ENCODE measurements at regions of chr15 and their contacts with region 1.

Region 1: GRCh38 chr15:64216730-64217428 is 54.1 kb upstream of the PPIB start:
- DNase-seq: peak; percentile 97
- ATAC-seq: peak; percentile 100
- H3K4me3 ChIP-seq: no peak overlapping the region
- H3K27ac ChIP-seq: peak overlapping the region; percentile 56
- H3K4me1 ChIP-seq: peaks cover 49% of the 10 kb centered on the region
- H3K27me3 ChIP-seq: no peaks in the 10 kb centered on the region
- CTCF ChIP-seq: peak; percentile 72
- EP300 ChIP-seq: peak in 1 of 2 experiments; percentile 76; a peak in 2 of 4 replicates
- POLR2A ChIP-seq: no peak
- RAD21 ChIP-seq: 0 out of 2 replicates have a peak, but pooled peaks have one; percentile 37

Region 2: GRCh38 chr15:63860155-63860554 is 356.7 kb before region 1 on chr15:
- CTCF ChIA-PET with region 1: no interaction called
- POLR2A ChIA-PET with region 1: no interaction called
- in situ Hi-C with region 1: no loop called
- intact Hi-C with region 1: no loop called
- DNase-seq: no peak
- ATAC-seq: no peak
- H3K4me3 ChIP-seq: no peak overlapping the region
- H3K27ac ChIP-seq: no peak overlapping the region
- H3K4me1 ChIP-seq: peaks cover 39% of the 10 kb centered on the region
- H3K27me3 ChIP-seq: no peaks in the 10 kb centered on the region
- CTCF ChIP-seq: no peak
- EP300 ChIP-seq: no peak
- POLR2A ChIP-seq: no peak
- RAD21 ChIP-seq: no peak

Region 3: DNA sequence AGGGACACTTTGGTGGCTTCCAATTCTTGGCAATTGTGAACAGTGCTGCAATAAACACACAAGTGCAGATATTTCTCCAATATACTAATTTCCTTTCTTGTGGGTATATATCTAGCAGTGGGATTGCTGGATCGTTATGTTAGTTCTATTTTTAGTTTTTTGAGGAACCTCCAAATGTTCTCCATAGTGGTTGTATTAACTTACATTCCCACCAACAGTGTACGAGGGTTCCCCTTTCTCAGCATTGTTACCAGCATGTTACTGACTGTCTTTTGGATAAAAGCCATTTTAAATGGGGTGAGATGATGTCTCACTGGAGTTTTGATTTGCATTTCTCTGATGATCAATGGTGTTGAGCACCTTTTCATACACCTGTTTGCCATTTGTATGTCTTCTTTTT is 263.4 kb before region 1 on chr15:
- CTCF ChIA-PET with region 1: no interaction called
- POLR2A ChIA-PET with region 1: no interaction called
- in situ Hi-C with region 1: no loop called
- intact Hi-C with region 1: no loop called
- DNase-seq: no peak
- ATAC-seq: no peak
- H3K4me3 ChIP-seq: no peak overlapping the region
- H3K27ac ChIP-seq: no peak overlapping the region
- H3K4me1 ChIP-seq: no peaks in the 10 kb centered on the region
- H3K27me3 ChIP-seq: no peaks in the 10 kb centered on the region
- CTCF ChIP-seq: no peak
- EP300 ChIP-seq: no peak
- POLR2A ChIP-seq: no peak
- RAD21 ChIP-seq: no peak

Region 4: GRCh38 chr15:64162870-64163658 is 53.8 kb before region 1 on chr15 and contains the start of gene PPIB:
- CTCF ChIA-PET with region 1: no interaction called
- POLR2A ChIA-PET with region 1: interaction called, 11 read pairs
- in situ Hi-C with region 1: no loop called
- intact Hi-C with region 1: no loop called
- DNase-seq: peak; percentile 93
- ATAC-seq: peak; percentile 96
- H3K4me3 ChIP-seq: peak within 1 kb of the TSS; percentile 95 to 98 (median 97)
- H3K27ac ChIP-seq: peak within 1 kb of the TSS; percentile 90
- H3K4me1 ChIP-seq: peaks cover 53% of the 10 kb centered on the region
- H3K27me3 ChIP-seq: no peaks in the 10 kb centered on the region; a peak in 1 of 5 replicates
- CTCF ChIP-seq: peak; percentile 89
- EP300 ChIP-seq: 0 out of 4 replicates have a peak, but pooled peaks of 1 of the 2 experiments have one; percentile 19
- POLR2A ChIP-seq: peak; percentile 88
- RAD21 ChIP-seq: peak; percentile 66
- total RNA-seq, gene PPIB: 476 and 882 TPM in 2 replicates

Region 5: GRCh38 chr15:64247906-64248541 is 31.1 kb after region 1 on chr15:
- CTCF ChIA-PET with region 1: no interaction called
- POLR2A ChIA-PET with region 1: interaction called, 4 read pairs
- in situ Hi-C with region 1: no loop called
- intact Hi-C with region 1: loop called (anchors 1 kb)
- DNase-seq: peak; percentile 93
- ATAC-seq: peak; percentile 95
- H3K4me3 ChIP-seq: peak overlapping the region in 1 of 3 experiments; percentile 13; a peak in 1 of 6 replicates
- H3K27ac ChIP-seq: peak overlapping the region; percentile 84
- H3K4me1 ChIP-seq: peaks cover 52% of the 10 kb centered on the region
- H3K27me3 ChIP-seq: no peaks in the 10 kb centered on the region
- CTCF ChIP-seq: no peak
- EP300 ChIP-seq: peak; percentile 66 to 75; a peak in 2 of 4 replicates
- POLR2A ChIP-seq: no peak
- RAD21 ChIP-seq: no peak

Region 6: GRCh38 chr15:64355944-64356709 is 139.2 kb after region 1 on chr15 and contains the start of gene CSNK1G1:
- CTCF ChIA-PET with region 1: no interaction called
- POLR2A ChIA-PET with region 1: interaction called, 3 read pairs
- in situ Hi-C with region 1: no loop called
- intact Hi-C with region 1: loop called (anchors 1 kb)
- DNase-seq: peak; percentile 96
- ATAC-seq: peak; percentile 98
- H3K4me3 ChIP-seq: peak within 1 kb of the TSS; percentile 85 to 95 (median 94)
- H3K27ac ChIP-seq: peak within 1 kb of the TSS; percentile 64
- H3K4me1 ChIP-seq: peaks cover 19% of the 10 kb centered on the region
- H3K27me3 ChIP-seq: no peaks in the 10 kb centered on the region; a peak in 1 of 5 replicates
- CTCF ChIP-seq: peak; percentile 42; the same call in 1 of the 2 replicates
- EP300 ChIP-seq: no peak
- POLR2A ChIP-seq: peak in 1 of 2 experiments; percentile 68; a peak in 2 of 4 replicates
- RAD21 ChIP-seq: peak; percentile 41; the same call in 1 of the 2 replicates
- total RNA-seq, gene CSNK1G1: 12.6 and 14.9 TPM in 2 replicates

Region 7: DNA sequence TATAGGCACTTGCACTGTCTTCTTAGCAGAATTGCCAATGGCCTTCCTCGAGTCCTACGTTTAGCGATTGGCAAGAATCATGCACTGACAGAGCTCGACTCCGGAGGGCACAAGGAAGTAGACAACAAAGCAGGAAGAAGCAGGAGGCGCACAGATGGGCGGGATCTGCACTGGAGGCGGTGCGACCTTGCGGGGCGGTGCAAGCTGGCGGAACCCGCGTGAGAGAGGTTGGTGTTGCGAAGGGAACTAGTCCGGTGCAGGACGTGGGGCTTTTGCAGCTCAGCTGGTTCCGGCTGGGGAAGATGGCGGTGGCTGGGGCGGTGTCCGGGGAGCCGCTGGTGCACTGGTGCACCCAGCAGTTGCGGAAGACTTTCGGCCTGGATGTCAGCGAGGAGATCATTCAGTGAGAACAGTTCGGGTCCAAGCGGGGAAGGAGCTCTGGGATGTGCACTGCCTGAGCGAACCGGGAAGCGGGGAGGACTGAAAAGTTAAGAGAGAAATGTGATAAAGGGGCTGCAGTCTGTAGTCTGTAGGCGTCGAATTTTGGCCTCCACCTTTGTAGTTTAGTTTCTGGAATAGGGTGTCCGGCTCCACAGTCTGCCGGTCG is 170.8 kb after region 1 on chr15 and contains the start of gene TRIP4:
- CTCF ChIA-PET with region 1: no interaction called
- POLR2A ChIA-PET with region 1: interaction called, 10 read pairs
- in situ Hi-C with region 1: no loop called
- intact Hi-C with region 1: no loop called
- DNase-seq: peak; percentile 93
- ATAC-seq: peak; percentile 100
- H3K4me3 ChIP-seq: peak within 1 kb of the TSS; percentile 67 to 98 (median 94)
- H3K27ac ChIP-seq: peak within 1 kb of the TSS; percentile 72
- H3K4me1 ChIP-seq: peaks cover 20% of the 10 kb centered on the region
- H3K27me3 ChIP-seq: no peaks in the 10 kb centered on the region; a peak in 1 of 5 replicates
- CTCF ChIP-seq: peak; percentile 61
- EP300 ChIP-seq: peak in 1 of 2 experiments; percentile 67; a peak in 2 of 4 replicates
- POLR2A ChIP-seq: peak; percentile 90 to 91
- RAD21 ChIP-seq: peak; percentile 76
- total RNA-seq, gene TRIP4: 7.1 and 19.7 TPM in 2 replicates

Region 8: GRCh38 chr15:64521726-64522164 is 304.9 kb after region 1 on chr15:
- CTCF ChIA-PET with region 1: no interaction called
- POLR2A ChIA-PET with region 1: no interaction called
- in situ Hi-C with region 1: no loop called
- intact Hi-C with region 1: loop called (anchors 2 kb)
- DNase-seq: peak; percentile 78
- ATAC-seq: peak; percentile 86
- H3K4me3 ChIP-seq: no peak overlapping the region
- H3K27ac ChIP-seq: no peak overlapping the region
- H3K4me1 ChIP-seq: peaks cover 33% of the 10 kb centered on the region
- H3K27me3 ChIP-seq: no peaks in the 10 kb centered on the region
- CTCF ChIP-seq: no peak
- EP300 ChIP-seq: peak in 1 of 2 experiments; percentile 52; a peak in 1 of 4 replicates
- POLR2A ChIP-seq: no peak
- RAD21 ChIP-seq: no peak

Measured in HepG2 (cell line).